ENCODE measurements at regions of chr2 and their contacts with region 1.

Region 1: DNA sequence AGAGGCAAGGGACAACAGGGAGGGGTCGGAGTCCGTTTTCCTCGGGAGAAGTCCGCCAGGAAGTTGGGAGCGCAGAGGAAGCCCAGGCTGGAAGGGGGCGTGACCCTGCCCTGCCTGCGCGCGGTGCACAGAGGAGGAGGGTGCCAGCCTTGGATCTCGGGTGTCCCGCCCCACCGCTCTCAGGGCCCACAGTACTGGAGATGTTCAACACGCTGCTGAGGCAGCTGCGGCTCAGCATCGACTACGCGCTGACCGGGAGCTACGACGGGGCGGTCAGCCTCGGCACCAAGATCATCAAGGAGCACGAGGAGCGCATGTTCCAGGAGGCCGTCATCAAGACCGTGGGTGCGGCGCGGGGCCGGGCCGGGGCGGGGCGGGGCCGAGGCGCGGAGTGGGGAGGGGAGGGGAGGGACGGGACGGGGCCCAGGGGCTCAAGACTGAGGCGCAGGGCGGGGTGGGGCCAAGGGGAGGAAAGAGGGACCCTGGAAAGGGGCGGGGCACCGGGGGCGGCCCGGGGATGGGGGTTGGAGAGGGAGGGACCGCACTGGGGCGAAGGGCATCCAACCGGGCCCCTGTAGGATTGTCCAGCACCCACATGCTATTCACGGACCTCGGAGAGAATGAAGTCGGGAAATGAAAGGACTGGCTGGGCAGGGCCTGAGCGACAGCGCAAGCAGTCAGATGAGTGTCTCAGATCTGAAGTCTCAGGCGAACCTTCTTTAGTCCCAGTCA is 36.6 kb downstream of the POMC start:
- DNase-seq: peak; percentile 42
- ATAC-seq: no peak
- H3K4me3 ChIP-seq: peak overlapping the region in 3 of 5 experiments; percentile 8 to 39 (median 23)
- H3K4me3 Mint-ChIP-seq: peak overlapping the region; percentile 81
- H3K27ac ChIP-seq: no peak overlapping the region
- H3K27ac Mint-ChIP-seq: no peak overlapping the region
- H3K4me1 ChIP-seq: peaks cover 11 to 18% of the 10 kb centered on the region in 2 donors
- H3K4me1 Mint-ChIP-seq: peaks cover 16% of the 10 kb centered on the region
- H3K27me3 ChIP-seq: peaks cover 0 to 41% (median 22%) of the 10 kb centered on the region in 4 experiments
- H3K27me3 Mint-ChIP-seq: peaks cover 53% of the 10 kb centered on the region
- CTCF ChIP-seq: no peak

Region 2: GRCh38 chr2:24898122-24899021 is 233.4 kb before region 1 on chr2:
- CTCF ChIA-PET with region 1: no interaction called
- POLR2A ChIA-PET with region 1: no interaction called
- intact Hi-C with region 1: no loop called
- DNase-seq: no peak
- ATAC-seq: no peak
- H3K4me3 ChIP-seq: no peak overlapping the region
- H3K4me3 Mint-ChIP-seq: no peak overlapping the region
- H3K27ac ChIP-seq: no peak overlapping the region
- H3K27ac Mint-ChIP-seq: no peak overlapping the region
- H3K4me1 ChIP-seq: no peaks in the 10 kb centered on the region
- H3K4me1 Mint-ChIP-seq: no peaks in the 10 kb centered on the region
- H3K27me3 ChIP-seq: no peaks in the 10 kb centered on the region
- H3K27me3 Mint-ChIP-seq: no peaks in the 10 kb centered on the region
- CTCF ChIP-seq: no peak

Region 3: GRCh38 chr2:25197336-25198208 is 65.8 kb after region 1 on chr2:
- CTCF ChIA-PET with region 1: interaction called, 10 read pairs
- POLR2A ChIA-PET with region 1: no interaction called
- intact Hi-C with region 1: loop called (anchors 1 kb)
- DNase-seq: no peak
- ATAC-seq: no peak
- H3K4me3 ChIP-seq: no peak overlapping the region
- H3K4me3 Mint-ChIP-seq: no peak overlapping the region
- H3K27ac ChIP-seq: no peak overlapping the region
- H3K27ac Mint-ChIP-seq: no peak overlapping the region
- H3K4me1 ChIP-seq: peaks cover 6 to 14% of the 10 kb centered on the region in 2 donors
- H3K4me1 Mint-ChIP-seq: peaks cover 14% of the 10 kb centered on the region
- H3K27me3 ChIP-seq: peaks cover 0 to 6% (median 1%) of the 10 kb centered on the region in 4 experiments
- H3K27me3 Mint-ChIP-seq: no peaks in the 10 kb centered on the region
- CTCF ChIP-seq: no peak

Region 4: GRCh38 chr2:25623361-25623760 is 491.6 kb after region 1 on chr2:
- CTCF ChIA-PET with region 1: no interaction called
- POLR2A ChIA-PET with region 1: no interaction called
- intact Hi-C with region 1: no loop called
- DNase-seq: no peak
- ATAC-seq: no peak
- H3K4me3 ChIP-seq: no peak overlapping the region
- H3K4me3 Mint-ChIP-seq: no peak overlapping the region
- H3K27ac ChIP-seq: no peak overlapping the region
- H3K27ac Mint-ChIP-seq: no peak overlapping the region
- H3K4me1 ChIP-seq: no peaks in the 10 kb centered on the region
- H3K4me1 Mint-ChIP-seq: no peaks in the 10 kb centered on the region
- H3K27me3 ChIP-seq: no peaks in the 10 kb centered on the region
- H3K27me3 Mint-ChIP-seq: no peaks in the 10 kb centered on the region
- CTCF ChIP-seq: no peak